Mammary epithelial cell (primary cell): ENCODE measurements at regions of chr12 and their contacts with region 1.

Region 1: DNA sequence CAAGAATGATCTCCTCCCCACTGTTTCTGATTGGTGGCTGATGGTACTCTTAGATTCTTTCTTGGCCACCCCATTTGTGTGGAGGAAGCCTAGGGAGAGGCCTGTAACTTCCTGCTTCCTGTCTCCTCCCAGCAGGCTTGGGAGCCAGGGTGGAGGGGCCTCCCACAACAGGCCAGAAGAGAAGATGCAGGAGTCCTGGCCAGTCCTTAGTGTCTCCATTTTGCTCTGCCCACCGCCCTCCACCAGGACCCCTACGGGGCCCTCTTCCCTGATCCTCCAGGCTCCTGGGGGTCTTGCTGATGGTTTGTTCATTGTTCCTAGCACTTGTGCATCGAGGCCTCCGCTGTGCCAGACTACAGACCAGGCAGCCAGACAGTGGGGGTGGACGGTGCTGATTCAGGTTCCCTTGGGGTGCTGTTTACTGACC is 6.8 kb downstream of the TSPAN9 start:
- DNase-seq: no peak
- H3K4me3 ChIP-seq: no peak overlapping the region
- H3K27ac ChIP-seq: no peak overlapping the region
- H3K4me1 ChIP-seq: peaks cover 18% of the 10 kb centered on the region
- H3K27me3 ChIP-seq: no peaks in the 10 kb centered on the region
- CTCF ChIP-seq: no peak

Region 2: DNA sequence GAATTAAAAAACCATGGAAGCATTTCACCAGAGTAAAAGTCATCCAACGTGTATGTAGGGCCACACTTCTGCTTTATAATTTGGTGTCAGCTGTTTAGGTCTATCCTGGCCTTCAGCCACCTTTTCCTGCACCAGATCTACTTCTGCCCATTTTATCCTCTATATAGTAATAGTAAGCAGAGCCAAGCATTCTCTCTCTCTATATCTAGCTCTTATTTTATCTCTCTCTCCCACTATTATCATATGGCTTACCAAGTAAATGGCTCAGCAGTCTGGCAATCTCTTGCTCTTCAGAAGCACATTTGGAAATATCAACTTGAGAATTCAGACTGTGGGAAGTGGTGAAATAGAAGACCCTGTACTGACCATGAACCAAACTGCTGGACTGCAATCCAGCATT is 373.2 kb before region 1 on chr12:
- CTCF ChIA-PET with region 1: no interaction called
- dilution Hi-C with region 1: no loop called
- in situ Hi-C with region 1: no loop called
- intact Hi-C with region 1: no loop called
- DNase-seq: no peak
- H3K4me3 ChIP-seq: no peak overlapping the region
- H3K27ac ChIP-seq: no peak overlapping the region
- H3K4me1 ChIP-seq: no peaks in the 10 kb centered on the region
- H3K27me3 ChIP-seq: no peaks in the 10 kb centered on the region
- CTCF ChIP-seq: no peak

Region 3: DNA sequence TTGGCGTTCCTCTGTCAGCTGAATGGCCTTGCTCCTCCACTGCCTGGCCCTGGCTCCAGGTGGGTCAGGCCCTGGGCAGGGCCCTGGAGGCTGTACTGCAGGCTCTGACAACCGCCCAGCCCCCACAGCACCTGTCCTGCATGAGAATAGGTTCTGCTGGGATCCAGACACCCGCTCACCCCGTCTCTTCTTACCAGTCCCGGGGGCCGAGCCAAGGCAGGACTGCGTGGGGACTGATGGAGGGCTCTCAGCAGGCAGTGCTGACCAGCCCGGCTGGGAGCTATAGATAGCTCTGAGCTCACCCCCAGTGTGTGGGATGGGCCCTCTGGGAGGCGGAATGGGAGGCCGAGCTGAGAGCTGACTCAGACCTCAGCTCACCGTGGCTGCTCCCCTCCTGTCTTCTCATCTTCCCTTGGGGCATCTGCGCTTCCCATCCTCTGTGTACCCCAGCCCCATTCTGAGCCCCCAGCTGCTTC is 85.1 kb before region 1 on chr12:
- CTCF ChIA-PET with region 1: no interaction called
- dilution Hi-C with region 1: loop called (anchors 5 kb)
- in situ Hi-C with region 1: no loop called
- intact Hi-C with region 1: no loop called
- DNase-seq: no peak
- H3K4me3 ChIP-seq: no peak overlapping the region
- H3K27ac ChIP-seq: no peak overlapping the region
- H3K4me1 ChIP-seq: peaks cover 6% of the 10 kb centered on the region
- H3K27me3 ChIP-seq: no peaks in the 10 kb centered on the region
- CTCF ChIP-seq: no peak

Region 4: DNA sequence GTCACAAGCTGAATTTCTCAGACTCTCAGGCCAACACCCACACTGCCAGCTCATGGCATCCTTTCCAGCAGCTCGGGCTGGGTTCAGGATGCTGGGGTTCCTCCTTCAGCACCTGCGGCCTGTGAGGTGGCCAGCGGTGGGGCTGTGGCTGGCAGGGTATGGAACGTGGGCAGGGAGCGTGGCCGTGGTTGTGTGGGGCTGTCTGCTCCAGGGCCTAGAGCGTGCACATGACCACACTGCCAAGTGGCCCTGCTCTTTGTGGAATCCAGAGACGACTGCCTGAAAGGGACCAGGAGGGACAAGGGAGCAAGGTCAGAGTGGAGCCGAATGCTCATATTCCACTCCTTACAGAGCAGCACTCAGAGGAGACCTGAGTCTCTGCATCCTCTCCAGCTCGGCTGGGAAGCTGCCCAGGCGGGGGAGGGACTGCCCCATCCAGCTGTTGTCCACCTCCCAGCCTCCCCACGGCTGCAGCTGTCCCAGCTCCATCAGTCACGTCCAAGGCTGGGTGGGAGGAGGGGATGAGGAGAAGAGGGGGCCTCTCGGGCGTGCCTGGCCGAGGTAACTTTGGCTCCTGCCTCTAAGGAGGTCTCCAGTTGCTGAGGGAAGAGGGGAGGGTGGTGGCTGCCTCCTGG is 64.5 kb after region 1 on chr12:
- CTCF ChIA-PET with region 1: no interaction called
- dilution Hi-C with region 1: loop called (anchors 5 kb)
- in situ Hi-C with region 1: no loop called
- intact Hi-C with region 1: no loop called
- DNase-seq: no peak
- H3K4me3 ChIP-seq: no peak overlapping the region
- H3K27ac ChIP-seq: no peak overlapping the region
- H3K4me1 ChIP-seq: no peaks in the 10 kb centered on the region
- H3K27me3 ChIP-seq: no peaks in the 10 kb centered on the region
- CTCF ChIP-seq: no peak

Region 5: GRCh38 chr12:3520168-3520567 is 436.2 kb after region 1 on chr12:
- CTCF ChIA-PET with region 1: no interaction called
- dilution Hi-C with region 1: no loop called
- in situ Hi-C with region 1: no loop called
- intact Hi-C with region 1: no loop called
- DNase-seq: no peak
- H3K4me3 ChIP-seq: no peak overlapping the region
- H3K27ac ChIP-seq: no peak overlapping the region
- H3K4me1 ChIP-seq: peaks cover 18% of the 10 kb centered on the region
- H3K27me3 ChIP-seq: no peaks in the 10 kb centered on the region
- CTCF ChIP-seq: no peak